Cardiac septum (tissue), 1 donor: ENCODE measurements at regions of chr11 and their contacts with region 1.

Region 1: GRCh38 chr11:47552566-47553416 is at the start of gene CELF1:
- DNase-seq: peak; percentile 97
- total RNA-seq, gene CELF1: 102 TPM

Region 2: DNA sequence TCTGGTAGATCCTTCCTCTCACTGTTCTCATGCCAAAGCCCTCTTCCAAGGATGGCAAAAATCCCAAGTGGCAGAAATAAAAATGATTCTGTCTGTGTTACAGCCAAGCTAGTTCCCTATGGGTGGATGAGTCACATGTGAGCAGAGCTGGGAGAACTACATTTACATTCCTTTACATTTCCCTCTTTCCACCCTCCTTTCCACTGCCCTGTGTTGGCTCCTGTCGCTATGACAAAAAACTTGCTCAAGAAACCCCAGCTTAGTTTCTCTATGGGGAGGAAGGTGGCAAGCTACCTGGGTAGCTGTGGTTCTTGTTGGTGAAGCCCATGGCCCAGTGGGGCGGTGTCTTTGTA is 348.2 kb before region 1 on chr11:
- intact Hi-C with region 1: no loop called
- DNase-seq: no peak

Region 3: GRCh38 chr11:47466701-47467250 is 86.0 kb before region 1 on chr11:
- intact Hi-C with region 1: loop called (anchors 5 kb)
- DNase-seq: no peak

Region 4: DNA sequence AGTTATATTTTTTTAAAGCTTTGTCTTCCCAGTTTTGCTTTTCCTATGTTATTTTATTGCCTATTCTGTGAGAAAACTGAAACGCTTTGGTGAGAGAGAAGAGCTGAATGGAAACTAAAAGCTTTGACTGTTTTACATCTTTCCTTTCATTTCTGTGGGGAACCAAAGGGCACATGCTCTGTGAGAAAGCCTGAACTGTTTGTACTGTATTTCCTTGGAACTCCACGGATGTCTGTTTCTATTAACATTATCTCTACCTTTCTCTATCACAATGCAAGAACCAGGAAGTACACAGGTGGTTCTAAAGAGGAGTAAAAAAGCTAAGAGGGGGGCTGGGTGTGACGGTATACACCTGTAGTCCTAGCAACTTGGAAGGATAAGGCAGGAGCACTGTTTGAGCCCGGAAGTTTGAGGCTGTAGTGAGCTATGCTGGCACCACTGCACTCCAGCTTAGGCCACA is 43.7 kb before region 1 on chr11:
- intact Hi-C with region 1: loop called (anchors 5 kb)
- DNase-seq: no peak